AG04450 (cell line): ENCODE measurements at regions of chr7 and their contacts with region 1.

Region 1: DNA sequence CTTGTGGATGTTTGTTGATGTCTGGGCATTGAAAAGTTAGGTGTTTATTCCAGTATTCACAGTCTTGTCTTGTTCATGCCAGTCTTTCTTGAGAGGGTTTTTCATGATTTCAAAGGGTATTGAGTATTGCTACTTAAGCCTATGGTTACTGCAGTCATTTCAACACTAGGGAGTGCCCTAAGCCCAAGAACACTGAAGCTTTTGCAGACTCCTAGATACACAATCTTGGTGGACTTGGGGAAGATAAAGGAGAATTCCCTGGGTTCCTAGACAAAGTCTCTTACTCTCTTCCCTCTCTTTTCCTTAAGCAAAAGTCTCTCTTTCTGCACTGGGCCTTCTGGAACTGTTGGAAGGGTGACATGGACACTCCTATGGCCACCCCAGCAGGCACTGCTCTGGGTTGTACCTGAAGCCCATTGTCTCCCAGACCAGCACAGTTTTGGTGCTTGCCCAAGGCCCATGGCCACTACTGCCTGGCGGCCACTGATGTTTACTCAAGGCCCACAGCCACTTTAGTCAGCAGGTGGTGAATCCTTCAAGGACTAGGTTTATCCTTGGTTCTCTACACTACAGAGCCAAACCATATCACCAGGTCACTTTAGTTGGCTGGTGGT is 24.9 kb downstream of the SAMD9 start:
- DNase-seq: peak; percentile 34
- H3K4me3 ChIP-seq: no peak overlapping the region
- H3K27ac ChIP-seq: no peak overlapping the region
- H3K27me3 ChIP-seq: peaks cover 4% of the 10 kb centered on the region
- CTCF ChIP-seq: peak; percentile 71

Region 2: GRCh38 chr7:93043385-93043985 is 49.4 kb before region 1 on chr7:
- CTCF ChIA-PET with region 1: no interaction called
- POLR2A ChIA-PET with region 1: no interaction called
- DNase-seq: peak; percentile 79
- H3K4me3 ChIP-seq: peak overlapping the region; percentile 41
- H3K27ac ChIP-seq: peak overlapping the region; percentile 87
- H3K27me3 ChIP-seq: no peaks in the 10 kb centered on the region
- CTCF ChIP-seq: no peak

Region 3: GRCh38 chr7:93231799-93232672 is 139.2 kb after region 1 on chr7 and contains the start of gene VPS50:
- CTCF ChIA-PET with region 1: interaction called, 89 read pairs
- POLR2A ChIA-PET with region 1: no interaction called
- DNase-seq: peak; percentile 89
- H3K4me3 ChIP-seq: peak within 1 kb of the TSS; percentile 93
- H3K27ac ChIP-seq: no peak within 1 kb of the TSS
- H3K27me3 ChIP-seq: peaks cover 3% of the 10 kb centered on the region
- CTCF ChIP-seq: no peak
- polyA plus RNA-seq, gene VPS50: 15.2 and 21.8 TPM in 2 replicates